OCI-LY7 (cell line): ENCODE measurements at regions of chr2 and their contacts with region 1.

Region 1: GRCh38 chr2:10382354-10383061 is 65.6 kb downstream of the ODC1 start:
- DNase-seq: peak; percentile 85
- H3K4me3 ChIP-seq: peak overlapping the region; percentile 50
- H3K27ac ChIP-seq: peak overlapping the region; percentile 25
- H3K4me1 ChIP-seq: peaks cover 69% of the 10 kb centered on the region
- CTCF ChIP-seq: no peak

Region 2: DNA sequence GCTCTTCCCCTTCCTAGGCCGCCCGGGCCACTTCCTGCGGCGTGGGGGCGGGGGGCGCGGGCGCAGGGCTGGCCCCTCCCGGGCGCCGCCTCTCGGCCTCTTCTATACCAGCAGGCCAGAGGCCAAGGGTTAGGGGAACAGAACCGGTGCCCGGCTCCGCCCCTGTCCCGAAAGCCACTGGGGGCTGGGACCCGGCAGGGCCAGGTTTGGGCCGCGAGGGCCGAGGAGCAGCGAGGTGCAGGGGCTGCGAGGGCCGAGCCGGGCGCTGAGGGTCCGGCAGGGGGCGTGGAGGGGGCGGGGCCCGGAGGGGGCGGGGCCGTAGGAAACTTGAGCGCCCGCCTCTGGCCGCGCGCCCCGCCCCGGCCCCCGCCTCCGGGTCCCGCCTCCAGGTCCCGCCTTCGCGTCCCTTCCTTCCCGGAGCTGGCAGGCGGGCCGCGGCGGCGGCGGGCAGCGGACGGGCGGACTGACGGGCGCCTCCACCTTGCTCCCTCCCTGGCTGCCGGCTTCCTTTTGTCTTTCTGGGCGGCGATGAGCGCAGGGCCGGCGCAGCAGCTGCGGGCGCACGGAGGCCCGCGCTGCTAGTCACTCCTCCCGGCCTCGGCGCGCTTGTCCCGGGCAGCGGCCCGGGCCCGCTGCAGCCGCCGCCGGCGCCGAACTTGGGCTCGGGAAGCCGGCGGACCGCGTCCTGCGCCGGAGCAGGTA is 79.9 kb before region 1 on chr2 and contains the start of gene HPCAL1:
- CTCF ChIA-PET with region 1: no interaction called
- POLR2A ChIA-PET with region 1: interaction called, 13 read pairs
- intact Hi-C with region 1: loop called (anchors 1 kb)
- DNase-seq: peak; percentile 92
- H3K4me3 ChIP-seq: peak within 1 kb of the TSS; percentile 74
- H3K27ac ChIP-seq: peak within 1 kb of the TSS; percentile 41
- H3K4me1 ChIP-seq: peaks cover 25% of the 10 kb centered on the region
- CTCF ChIP-seq: peak; percentile 64
- total RNA-seq, gene HPCAL1: 9.1 and 9.7 TPM in 2 replicates

Region 3: GRCh38 chr2:10324095-10324835 is 58.2 kb before region 1 on chr2:
- CTCF ChIA-PET with region 1: interaction called, 6 read pairs
- POLR2A ChIA-PET with region 1: interaction called, 13 read pairs
- intact Hi-C with region 1: loop called (anchors 1 kb)
- DNase-seq: no peak
- H3K4me3 ChIP-seq: no peak overlapping the region
- H3K27ac ChIP-seq: no peak overlapping the region
- H3K4me1 ChIP-seq: peaks cover 56% of the 10 kb centered on the region
- CTCF ChIP-seq: no peak

Region 4: GRCh38 chr2:10331027-10331701 is 51.3 kb before region 1 on chr2:
- CTCF ChIA-PET with region 1: interaction called, 6 read pairs
- POLR2A ChIA-PET with region 1: interaction called, 13 read pairs
- intact Hi-C with region 1: loop called (anchors 1 kb)
- DNase-seq: peak; percentile 70
- H3K4me3 ChIP-seq: peak overlapping the region; percentile 62
- H3K27ac ChIP-seq: peak overlapping the region; percentile 53
- H3K4me1 ChIP-seq: peaks cover 73% of the 10 kb centered on the region
- CTCF ChIP-seq: no peak; the same call in 1 of the 2 replicates

Region 5: DNA sequence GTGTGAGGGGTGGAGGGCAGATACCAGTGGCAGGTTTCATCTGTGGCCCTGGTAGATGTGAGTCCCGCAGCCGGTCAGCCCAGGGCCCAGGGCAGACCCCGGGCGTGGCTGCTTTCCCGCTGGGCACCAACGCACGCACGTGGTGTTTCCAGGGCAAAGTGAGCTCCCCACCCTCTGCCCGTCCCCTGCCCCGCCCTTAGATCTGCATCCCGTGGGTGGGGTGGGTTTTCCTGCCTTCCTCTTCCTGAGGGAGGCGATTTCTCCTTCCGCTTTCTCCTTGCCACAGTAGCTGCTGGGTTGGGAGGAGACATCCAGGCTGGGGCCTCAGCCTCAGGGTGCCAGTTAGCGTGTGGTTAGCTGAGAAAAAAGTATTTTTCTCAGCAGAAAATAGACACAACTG is 16.0 kb after region 1 on chr2:
- CTCF ChIA-PET with region 1: no interaction called
- POLR2A ChIA-PET with region 1: no interaction called
- intact Hi-C with region 1: no loop called
- DNase-seq: no peak
- H3K4me3 ChIP-seq: no peak overlapping the region
- H3K27ac ChIP-seq: no peak overlapping the region
- H3K4me1 ChIP-seq: peaks cover 8% of the 10 kb centered on the region
- CTCF ChIP-seq: no peak